Activated CD4-positive, alpha-beta T cell treated with anti-CD3 and anti-CD28 coated beads for 36 hours (primary cell): ENCODE measurements at regions of chr15 and their contacts with region 1.

Region 1: DNA sequence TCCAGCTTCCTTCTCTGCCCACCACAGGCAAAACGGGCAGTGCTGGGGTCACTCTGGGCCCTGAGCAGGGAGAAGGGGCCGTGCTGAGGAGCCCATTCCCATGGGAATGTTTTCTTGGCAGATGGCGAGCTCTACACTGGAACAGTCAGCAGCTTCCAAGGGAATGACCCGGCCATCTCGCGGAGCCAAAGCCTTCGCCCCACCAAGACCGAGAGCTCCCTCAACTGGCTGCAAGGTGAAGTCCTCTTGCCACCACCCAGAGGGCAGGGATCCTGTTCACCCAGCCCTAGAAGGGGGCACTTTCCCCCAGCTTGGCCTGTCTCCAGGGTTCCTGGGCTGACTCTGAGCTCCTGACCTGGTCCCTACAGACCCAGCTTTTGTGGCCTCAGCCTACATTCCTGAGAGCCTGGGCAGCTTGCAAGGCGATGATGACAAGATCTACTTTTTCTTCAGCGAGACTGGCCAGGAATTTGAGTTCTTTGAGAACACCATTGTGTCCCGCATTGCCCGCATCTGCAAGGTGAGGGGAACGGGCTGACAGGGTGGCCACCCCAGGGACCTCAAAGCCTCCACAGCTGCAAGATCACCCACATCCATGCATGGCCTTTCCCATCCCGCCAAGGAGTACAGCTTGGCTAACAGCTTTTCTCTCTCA is 12.4 kb downstream of the CIB1 start:
- DNase-seq: peak; percentile 63
- ATAC-seq: peak; percentile 60
- H3K4me3 Mint-ChIP-seq: no peak overlapping the region
- H3K27ac Mint-ChIP-seq: no peak overlapping the region
- H3K4me1 Mint-ChIP-seq: no peaks in the 10 kb centered on the region
- H3K27me3 Mint-ChIP-seq: no peaks in the 10 kb centered on the region

Region 2: GRCh38 chr15:90286678-90287077 is 65.3 kb after region 1 on chr15:
- CTCF ChIA-PET with region 1: no interaction called
- POLR2A ChIA-PET with region 1: no interaction called
- intact Hi-C with region 1: loop called in 1 of 2 experiments (anchors 1 kb)
- DNase-seq: peak; percentile 61
- ATAC-seq: peak; percentile 83
- H3K4me3 Mint-ChIP-seq: no peak overlapping the region
- H3K27ac Mint-ChIP-seq: no peak overlapping the region
- H3K4me1 Mint-ChIP-seq: no peaks in the 10 kb centered on the region
- H3K27me3 Mint-ChIP-seq: no peaks in the 10 kb centered on the region